Right ventricle myocardium inferior (tissue), 1 donor: ENCODE measurements at regions of chr3 and their contacts with region 1.

Region 1: GRCh38 chr3:119498186-119498987 is at the start of gene TIMMDC1:
- DNase-seq: peak; percentile 97
- ATAC-seq: peak; percentile 100
- total RNA-seq, gene TIMMDC1: 340 TPM

Region 2: GRCh38 chr3:119463171-119464169 is 34.9 kb before region 1 on chr3 and contains the start of gene TMEM39A:
- intact Hi-C with region 1: loop called (anchors 2 kb)
- DNase-seq: peak; percentile 100
- ATAC-seq: peak; percentile 99
- total RNA-seq, gene TMEM39A: 17.0 TPM